Activated CD8-positive, alpha-beta T cell treated with anti-CD3 and anti-CD28 coated beads for 36 hours (primary cell): ENCODE measurements at regions of chr3 and their contacts with region 1.

Region 1: DNA sequence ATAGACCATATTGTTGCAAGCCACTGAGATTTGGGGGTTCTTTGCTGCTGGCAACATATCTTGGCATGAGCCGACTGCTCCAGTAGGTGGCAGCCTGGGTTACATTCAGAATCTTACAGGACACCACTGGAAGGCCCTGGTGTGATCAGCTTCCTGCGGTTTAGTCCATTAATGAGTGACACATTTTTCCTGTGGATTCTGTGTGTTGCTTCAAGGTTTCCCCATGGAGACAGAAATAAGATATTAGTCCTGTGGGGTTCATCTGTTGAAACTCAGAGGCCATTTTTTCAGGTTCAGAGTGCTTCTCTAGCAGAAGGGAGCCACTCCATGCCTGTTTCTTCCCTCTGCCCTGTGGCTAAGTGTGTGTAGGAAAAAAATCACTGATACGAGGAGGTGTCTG is 116.2 kb downstream of the MFSD1 start:
- DNase-seq: peak; percentile 48
- ATAC-seq: no peak
- H3K4me3 Mint-ChIP-seq: no peak overlapping the region
- H3K27ac Mint-ChIP-seq: no peak overlapping the region
- H3K4me1 Mint-ChIP-seq: no peaks in the 10 kb centered on the region
- H3K27me3 Mint-ChIP-seq: no peaks in the 10 kb centered on the region
- CTCF ChIP-seq: peak; percentile 43

Region 2: DNA sequence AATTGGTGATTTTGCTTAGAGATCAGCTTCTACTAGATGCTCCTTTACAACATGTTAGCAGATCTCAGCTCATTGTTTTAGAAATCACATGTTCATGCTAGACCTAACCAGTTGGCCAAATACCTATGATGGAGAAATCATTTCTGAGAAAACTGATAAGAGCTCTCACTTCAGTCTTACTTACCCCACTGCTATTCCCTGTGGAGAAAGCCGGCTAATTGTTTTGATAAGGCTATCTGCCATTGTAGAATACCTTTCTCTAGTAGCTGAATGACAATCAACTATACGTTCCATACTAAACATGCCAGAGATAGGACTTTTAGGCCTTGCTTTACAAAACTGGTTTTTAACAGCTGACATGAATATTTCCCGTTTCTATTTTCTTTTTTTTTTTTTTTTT is 373.2 kb before region 1 on chr3:
- CTCF ChIA-PET with region 1: no interaction called
- POLR2A ChIA-PET with region 1: no interaction called
- intact Hi-C with region 1: no loop called
- DNase-seq: no peak
- ATAC-seq: no peak
- H3K4me3 Mint-ChIP-seq: no peak overlapping the region
- H3K27ac Mint-ChIP-seq: no peak overlapping the region
- H3K4me1 Mint-ChIP-seq: no peaks in the 10 kb centered on the region
- H3K27me3 Mint-ChIP-seq: no peaks in the 10 kb centered on the region
- CTCF ChIP-seq: no peak

Region 3: GRCh38 chr3:158863247-158863646 is 54.8 kb before region 1 on chr3:
- CTCF ChIA-PET with region 1: no interaction called
- POLR2A ChIA-PET with region 1: no interaction called
- intact Hi-C with region 1: no loop called
- DNase-seq: no peak
- ATAC-seq: no peak
- H3K4me3 Mint-ChIP-seq: no peak overlapping the region
- H3K27ac Mint-ChIP-seq: no peak overlapping the region
- H3K4me1 Mint-ChIP-seq: no peaks in the 10 kb centered on the region
- H3K27me3 Mint-ChIP-seq: no peaks in the 10 kb centered on the region
- CTCF ChIP-seq: no peak

Region 4: DNA sequence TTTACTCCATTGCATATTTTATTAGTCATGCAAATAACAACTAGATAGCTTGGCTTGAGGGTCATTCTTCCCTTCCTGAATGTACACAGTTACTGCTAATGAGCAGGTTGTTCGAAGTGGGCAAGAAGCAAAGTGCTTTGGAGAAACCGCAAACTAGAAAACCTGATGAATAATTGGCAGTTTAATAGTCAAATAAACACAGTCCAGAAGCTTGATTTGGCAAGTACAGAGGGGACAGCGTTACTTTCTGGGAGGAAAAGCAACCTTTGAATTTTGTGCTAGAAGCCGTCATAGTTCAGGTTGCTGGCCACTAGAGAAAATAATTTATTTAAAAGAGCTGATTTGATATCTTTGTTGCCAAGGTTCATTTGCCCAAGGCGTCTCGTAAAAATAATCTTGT is 21.3 kb before region 1 on chr3:
- CTCF ChIA-PET with region 1: no interaction called
- POLR2A ChIA-PET with region 1: no interaction called
- intact Hi-C with region 1: no loop called
- DNase-seq: no peak
- ATAC-seq: no peak
- H3K4me3 Mint-ChIP-seq: no peak overlapping the region
- H3K27ac Mint-ChIP-seq: no peak overlapping the region
- H3K4me1 Mint-ChIP-seq: no peaks in the 10 kb centered on the region
- H3K27me3 Mint-ChIP-seq: no peaks in the 10 kb centered on the region
- CTCF ChIP-seq: no peak

Region 5: GRCh38 chr3:159260049-159260662 is 342.1 kb after region 1 on chr3:
- CTCF ChIA-PET with region 1: interaction called, 6 read pairs
- POLR2A ChIA-PET with region 1: no interaction called
- intact Hi-C with region 1: loop called (anchors 5 kb)
- DNase-seq: peak; percentile 61
- ATAC-seq: no peak
- H3K4me3 Mint-ChIP-seq: no peak overlapping the region
- H3K27ac Mint-ChIP-seq: no peak overlapping the region
- H3K4me1 Mint-ChIP-seq: no peaks in the 10 kb centered on the region
- H3K27me3 Mint-ChIP-seq: peaks cover 6% of the 10 kb centered on the region
- CTCF ChIP-seq: peak; percentile 65